ENCODE measurements at regions of chr7 and their contacts with region 1.

Region 1: GRCh38 chr7:106153891-106154449 is 41.9 kb upstream of the SYPL1 start:
- DNase-seq: peak; percentile 82
- ATAC-seq: peak; percentile 95 to 97
- H3K4me3 ChIP-seq: no peak overlapping the region
- H3K27ac ChIP-seq: no peak overlapping the region
- H3K4me1 ChIP-seq: no peaks in the 10 kb centered on the region
- H3K27me3 ChIP-seq: no peaks in the 10 kb centered on the region
- CTCF ChIP-seq: peak; percentile 96

Region 2: GRCh38 chr7:105621617-105622016 is 532.4 kb before region 1 on chr7:
- intact Hi-C with region 1: no loop called
- DNase-seq: no peak
- ATAC-seq: no peak
- H3K4me3 ChIP-seq: no peak overlapping the region
- H3K27ac ChIP-seq: no peak overlapping the region
- H3K4me1 ChIP-seq: no peaks in the 10 kb centered on the region
- H3K27me3 ChIP-seq: no peaks in the 10 kb centered on the region
- CTCF ChIP-seq: no peak

Region 3: GRCh38 chr7:106056513-106057203 is 97.3 kb before region 1 on chr7:
- intact Hi-C with region 1: loop called (anchors 5 kb)
- DNase-seq: peak; percentile 69
- ATAC-seq: peak; percentile 89 to 95
- H3K4me3 ChIP-seq: no peak overlapping the region
- H3K27ac ChIP-seq: no peak overlapping the region
- H3K4me1 ChIP-seq: peaks cover 7% of the 10 kb centered on the region
- H3K27me3 ChIP-seq: no peaks in the 10 kb centered on the region
- CTCF ChIP-seq: peak; percentile 87

Measured in lower lobe of right lung (tissue), 2 donors.